WTC11 (cell line): ENCODE measurements at regions of chr12 and their contacts with region 1.

Region 1: DNA sequence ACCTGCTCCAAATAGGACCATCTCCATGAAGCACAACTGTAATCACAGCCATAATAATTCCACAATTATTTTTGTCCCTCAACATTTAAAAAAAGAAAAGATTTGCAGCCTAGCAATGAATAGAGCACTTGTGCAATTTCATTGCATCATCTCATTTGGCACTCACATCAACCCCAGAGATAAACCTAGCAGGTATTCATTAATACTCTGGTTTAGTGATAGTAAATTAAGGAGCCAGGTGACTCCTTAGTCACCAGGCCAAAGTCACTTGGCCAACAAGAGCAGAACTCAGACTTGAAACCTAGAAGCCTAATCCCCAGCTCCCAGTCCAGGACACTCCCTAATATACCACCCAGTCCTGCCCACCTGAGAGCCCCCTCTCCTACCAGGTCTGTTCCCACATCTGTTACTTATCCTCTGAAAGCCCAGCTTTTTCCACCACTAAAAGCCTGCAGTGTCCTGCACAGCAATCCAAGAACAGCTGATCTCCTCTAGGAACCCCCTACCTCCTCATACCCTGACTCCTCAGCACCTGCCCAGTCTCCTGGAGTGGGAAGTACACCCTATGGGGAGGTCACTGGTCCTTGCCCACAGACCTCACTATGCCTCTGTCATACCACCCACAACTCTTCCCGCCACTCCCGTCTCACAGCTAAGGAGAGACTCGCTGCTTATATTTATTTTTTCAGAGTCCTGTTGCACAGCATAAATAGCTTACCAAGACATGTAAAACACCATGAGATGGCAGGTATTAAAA is 22.1 kb downstream of the OR10P1 start:
- DNase-seq: no peak
- ATAC-seq: no peak
- H3K4me3 Mint-ChIP-seq: no peak overlapping the region
- H3K27ac Mint-ChIP-seq: no peak overlapping the region
- H3K4me1 Mint-ChIP-seq: no peaks in the 10 kb centered on the region
- H3K27me3 Mint-ChIP-seq: peaks cover 9% of the 10 kb centered on the region
- CTCF ChIP-seq: no peak

Region 2: GRCh38 chr12:55647027-55647426 is 11.8 kb before region 1 on chr12:
- CTCF ChIA-PET with region 1: interaction called, 67 read pairs
- POLR2A ChIA-PET with region 1: no interaction called
- DNase-seq: no peak
- ATAC-seq: no peak
- H3K4me3 Mint-ChIP-seq: no peak overlapping the region
- H3K27ac Mint-ChIP-seq: peak overlapping the region; percentile 52; the same call in 1 of the 2 replicates
- H3K4me1 Mint-ChIP-seq: peaks cover 19% of the 10 kb centered on the region
- H3K27me3 Mint-ChIP-seq: peaks cover 16% of the 10 kb centered on the region
- CTCF ChIP-seq: no peak

Region 3: DNA sequence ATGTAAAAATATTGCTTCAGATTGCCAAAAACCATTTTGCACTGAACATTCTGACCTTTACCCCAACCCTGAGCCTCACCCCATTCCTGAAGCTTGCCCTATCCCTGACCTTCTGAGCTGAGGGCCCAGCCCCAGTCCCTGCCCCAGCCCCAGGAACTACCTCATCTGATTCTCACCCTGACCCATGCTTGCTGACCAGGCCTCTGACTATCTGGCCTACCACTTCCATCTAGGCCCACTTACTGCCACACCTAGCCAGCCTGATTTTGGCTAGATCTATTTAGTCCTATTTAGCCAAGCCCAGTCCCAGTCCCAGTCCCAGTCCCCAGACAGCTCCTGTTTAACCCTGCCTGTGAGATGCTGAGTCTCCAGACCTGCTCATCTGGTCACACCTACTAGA is 11.5 kb after region 1 on chr12:
- CTCF ChIA-PET with region 1: interaction called, 15 read pairs
- POLR2A ChIA-PET with region 1: no interaction called
- DNase-seq: no peak
- ATAC-seq: no peak
- H3K4me3 Mint-ChIP-seq: no peak overlapping the region
- H3K27ac Mint-ChIP-seq: no peak overlapping the region
- H3K4me1 Mint-ChIP-seq: no peaks in the 10 kb centered on the region
- H3K27me3 Mint-ChIP-seq: peaks cover 14% of the 10 kb centered on the region
- CTCF ChIP-seq: no peak

Region 4: DNA sequence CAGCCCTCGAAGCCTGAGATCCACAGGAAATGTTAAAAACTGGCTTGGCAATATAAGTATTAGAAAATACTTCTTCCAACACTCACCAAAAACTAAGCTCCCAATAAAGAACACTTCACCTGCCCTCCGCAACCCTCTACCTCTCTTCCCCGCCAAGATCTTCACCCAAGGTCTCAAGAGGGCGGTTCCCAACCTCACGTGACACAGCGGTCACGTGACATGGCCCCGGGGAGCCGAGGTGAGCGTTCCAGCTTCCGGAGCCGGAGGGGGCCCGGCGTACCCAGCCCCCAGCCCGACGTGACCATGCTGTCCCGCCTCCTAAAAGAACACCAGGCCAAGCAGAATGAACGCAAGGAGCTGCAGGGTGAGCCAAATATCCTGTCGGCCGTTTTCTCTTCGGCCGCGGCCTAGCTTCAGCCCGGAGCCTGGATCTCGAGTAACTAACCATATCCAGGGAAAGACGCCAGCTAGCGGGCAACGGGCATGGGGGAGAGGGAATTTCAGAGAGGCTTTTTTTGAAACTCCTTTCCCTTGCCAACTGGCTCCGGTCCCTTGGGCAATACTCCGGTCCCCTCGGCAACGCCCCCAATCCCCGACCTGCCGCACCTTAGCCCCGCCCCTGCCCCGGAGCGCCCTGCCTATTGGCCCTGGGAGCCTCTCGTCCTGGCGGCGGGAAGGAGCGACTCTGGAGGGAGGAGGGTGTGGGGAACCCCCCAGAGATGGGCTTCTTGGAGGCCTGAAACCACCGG is 57.2 kb after region 1 on chr12 and contains the start of gene BLOC1S1:
- CTCF ChIA-PET with region 1: interaction called, 24 read pairs
- POLR2A ChIA-PET with region 1: no interaction called
- DNase-seq: peak; percentile 96
- ATAC-seq: peak; percentile 88
- H3K4me3 Mint-ChIP-seq: peak within 1 kb of the TSS; percentile 85
- H3K27ac Mint-ChIP-seq: peak within 1 kb of the TSS; percentile 84
- H3K4me1 Mint-ChIP-seq: peaks cover 37% of the 10 kb centered on the region
- H3K27me3 Mint-ChIP-seq: peaks cover 24% of the 10 kb centered on the region
- CTCF ChIP-seq: no peak
- total RNA-seq, gene BLOC1S1: 81.9 to 97.1 TPM (median 95.1 TPM) in 3 replicates

Region 5: GRCh38 chr12:56020423-56021184 is 361.8 kb after region 1 on chr12 and contains the start of gene IKZF4:
- CTCF ChIA-PET with region 1: no interaction called
- POLR2A ChIA-PET with region 1: no interaction called
- DNase-seq: peak; percentile 72
- ATAC-seq: peak; percentile 91
- H3K4me3 Mint-ChIP-seq: peak within 1 kb of the TSS; percentile 89
- H3K27ac Mint-ChIP-seq: peak within 1 kb of the TSS; percentile 95
- H3K4me1 Mint-ChIP-seq: peaks cover 29% of the 10 kb centered on the region
- H3K27me3 Mint-ChIP-seq: no peaks in the 10 kb centered on the region
- CTCF ChIP-seq: no peak
- total RNA-seq, gene IKZF4: 13.6 to 14.9 TPM (median 14.8 TPM) in 3 replicates